Activated naive CD4-positive, alpha-beta T cell treated with anti-CD3 and anti-CD28 coated beads for 36 hours (primary cell): ENCODE measurements at regions of chr21 and their contacts with region 1.

Region 1: DNA sequence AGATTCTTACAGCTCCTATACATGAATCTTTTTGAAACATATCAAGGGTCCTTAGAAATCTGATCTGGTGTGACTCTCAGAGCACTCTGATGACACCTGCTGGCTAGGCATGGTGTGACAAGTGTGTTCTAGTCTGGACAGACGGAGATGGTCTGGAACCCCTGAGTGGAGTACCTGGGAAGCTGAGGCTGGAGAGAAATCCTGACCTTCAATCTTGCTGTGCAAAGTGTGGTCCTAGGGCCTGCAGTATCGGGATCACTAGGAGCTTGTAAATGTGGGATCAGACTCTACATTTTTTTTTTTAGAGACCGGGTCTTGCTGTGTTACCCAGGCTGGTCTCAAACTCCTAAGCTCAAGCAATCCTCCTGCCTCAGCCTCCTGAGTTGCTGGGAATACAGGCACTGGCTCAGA is 78.6 kb upstream of the SOD1 start:
- DNase-seq: peak; percentile 88
- H3K4me3 Mint-ChIP-seq: no peak overlapping the region
- H3K27ac Mint-ChIP-seq: no peak overlapping the region
- H3K4me1 Mint-ChIP-seq: peaks cover 2% of the 10 kb centered on the region
- H3K27me3 Mint-ChIP-seq: no peaks in the 10 kb centered on the region

Region 2: DNA sequence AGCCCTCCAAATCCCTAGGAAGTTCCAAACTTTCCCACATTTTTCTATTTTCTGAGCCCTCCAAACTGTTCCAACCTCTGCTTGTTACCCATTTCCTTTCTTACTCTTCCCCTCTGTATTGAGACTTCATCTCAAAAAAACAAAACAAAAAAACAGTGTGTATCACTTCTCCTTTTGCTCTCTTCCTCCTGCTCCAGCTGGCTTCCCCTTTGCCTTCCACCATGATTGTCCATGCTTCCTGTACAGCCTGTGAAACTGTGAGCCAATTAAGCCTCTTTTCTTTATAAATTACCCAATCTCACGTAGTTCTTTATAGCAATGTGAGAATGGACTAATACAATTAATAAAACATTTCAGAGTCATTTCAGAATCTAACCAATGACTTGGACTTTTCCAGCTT is 473.0 kb before region 1 on chr21:
- CTCF ChIA-PET with region 1: interaction called, 58 read pairs
- intact Hi-C with region 1: loop called (anchors 1 kb)
- DNase-seq: no peak
- H3K4me3 Mint-ChIP-seq: no peak overlapping the region
- H3K27ac Mint-ChIP-seq: no peak overlapping the region
- H3K4me1 Mint-ChIP-seq: peaks cover 28% of the 10 kb centered on the region
- H3K27me3 Mint-ChIP-seq: no peaks in the 10 kb centered on the region

Region 3: DNA sequence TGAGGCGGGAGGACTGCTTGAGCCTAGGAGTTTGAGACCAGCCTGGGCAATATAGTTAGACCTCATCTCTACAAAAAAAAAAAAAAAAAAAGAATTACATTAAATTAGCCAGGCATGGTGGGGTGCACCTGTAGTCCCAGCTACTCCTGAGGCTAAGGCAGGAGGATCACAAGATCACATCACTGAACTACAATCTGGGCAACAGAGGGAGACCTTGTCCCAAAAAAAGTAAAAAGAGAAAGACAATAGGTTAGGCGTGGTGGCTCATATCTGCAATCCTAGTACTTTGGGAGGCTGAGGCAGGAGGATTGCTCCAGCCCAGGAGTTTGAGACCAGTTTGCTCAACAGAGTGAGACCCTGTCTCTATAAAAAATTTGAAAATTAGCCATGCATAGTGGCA is 367.1 kb before region 1 on chr21:
- CTCF ChIA-PET with region 1: interaction called, 24 read pairs
- intact Hi-C with region 1: loop called (anchors 1 kb)
- DNase-seq: no peak
- H3K4me3 Mint-ChIP-seq: no peak overlapping the region
- H3K27ac Mint-ChIP-seq: no peak overlapping the region
- H3K4me1 Mint-ChIP-seq: no peaks in the 10 kb centered on the region
- H3K27me3 Mint-ChIP-seq: no peaks in the 10 kb centered on the region

Region 4: DNA sequence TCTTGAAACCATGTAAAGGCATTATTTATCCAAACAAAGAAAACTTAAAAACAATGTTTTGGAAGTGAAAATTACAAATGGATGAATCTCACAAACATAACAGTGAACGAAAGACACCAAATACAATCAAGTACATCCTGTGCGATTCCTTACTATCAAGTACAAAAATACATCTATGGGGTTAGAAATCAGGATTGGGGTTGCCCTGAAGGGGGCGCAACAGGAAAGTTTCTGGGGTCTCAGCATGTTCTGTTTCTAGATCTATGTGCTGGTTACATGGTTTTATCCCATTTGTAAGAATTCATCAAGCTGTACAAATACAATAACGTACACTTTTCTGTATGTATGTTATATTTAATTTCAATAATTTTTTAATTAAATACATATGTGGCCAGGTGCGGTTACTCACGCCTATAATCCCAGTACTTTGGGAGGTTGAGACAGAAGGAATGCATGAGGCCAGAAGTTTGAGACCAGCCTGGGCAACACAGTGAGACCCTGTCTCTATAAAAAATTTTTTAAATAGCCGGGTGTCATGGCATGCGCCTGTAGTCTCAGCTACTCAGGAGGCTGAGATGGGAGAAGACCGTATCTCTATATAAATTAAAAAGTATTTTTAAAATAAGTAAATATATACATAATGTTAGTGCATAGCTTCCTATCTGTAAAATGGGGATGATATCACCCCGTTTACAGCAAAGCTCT is 42.8 kb before region 1 on chr21:
- CTCF ChIA-PET with region 1: interaction called, 12 read pairs
- intact Hi-C with region 1: loop called (anchors 2 kb)
- DNase-seq: peak; percentile 51
- H3K4me3 Mint-ChIP-seq: no peak overlapping the region
- H3K27ac Mint-ChIP-seq: no peak overlapping the region
- H3K4me1 Mint-ChIP-seq: no peaks in the 10 kb centered on the region
- H3K27me3 Mint-ChIP-seq: no peaks in the 10 kb centered on the region

Region 5: GRCh38 chr21:31592516-31592915 is 11.6 kb after region 1 on chr21:
- CTCF ChIA-PET with region 1: interaction called, 16 read pairs
- intact Hi-C with region 1: no loop called
- DNase-seq: no peak
- H3K4me3 Mint-ChIP-seq: no peak overlapping the region
- H3K27ac Mint-ChIP-seq: no peak overlapping the region
- H3K4me1 Mint-ChIP-seq: no peaks in the 10 kb centered on the region
- H3K27me3 Mint-ChIP-seq: no peaks in the 10 kb centered on the region

Region 6: GRCh38 chr21:31612894-31613745 is 32.2 kb after region 1 on chr21:
- CTCF ChIA-PET with region 1: interaction called, 10 read pairs
- intact Hi-C with region 1: no loop called
- DNase-seq: no peak
- H3K4me3 Mint-ChIP-seq: no peak overlapping the region
- H3K27ac Mint-ChIP-seq: no peak overlapping the region
- H3K4me1 Mint-ChIP-seq: no peaks in the 10 kb centered on the region
- H3K27me3 Mint-ChIP-seq: peaks cover 9% of the 10 kb centered on the region